Right cardiac atrium (tissue), 5 donors: ENCODE measurements at regions of chr16 and their contacts with region 1.

Region 1: DNA sequence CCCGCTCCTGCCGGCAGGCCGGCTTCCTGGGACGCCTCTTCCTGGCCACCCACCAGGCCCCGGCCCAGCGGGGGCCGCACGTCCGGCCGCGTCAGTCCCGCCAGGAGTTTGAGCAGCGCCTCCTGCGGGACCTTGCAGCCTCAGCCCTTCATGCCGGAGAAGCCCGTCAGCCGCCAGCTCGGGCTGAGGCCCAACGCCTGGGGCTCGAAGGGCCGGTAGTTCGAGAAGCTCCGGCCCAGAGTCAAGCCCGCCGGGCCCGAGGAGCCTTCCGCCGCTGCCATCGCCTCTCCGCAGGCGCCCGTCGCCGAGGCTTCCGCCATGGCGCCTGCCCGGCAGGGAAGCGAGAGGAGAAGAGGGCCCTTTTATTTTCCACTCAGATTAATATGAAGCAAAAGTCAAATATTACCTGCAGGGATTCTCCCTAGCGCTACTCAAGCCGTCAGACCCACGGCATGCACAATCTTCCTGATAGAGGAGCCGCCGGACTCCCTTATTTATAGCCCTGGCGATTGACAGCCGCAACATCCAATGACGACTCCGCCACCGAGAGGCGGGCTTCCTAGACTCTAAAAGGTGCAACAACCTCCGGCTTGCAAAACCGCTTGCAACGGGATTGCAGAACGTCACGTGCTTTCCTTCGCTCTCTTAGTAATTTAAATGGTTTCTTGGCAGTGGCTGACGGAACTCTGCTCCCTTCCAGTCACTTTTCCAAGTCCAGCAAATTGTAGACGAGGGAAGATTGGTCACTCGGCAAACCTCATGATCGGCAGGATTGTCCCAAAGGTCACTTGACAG is at the start of gene SEPHS2:
- DNase-seq: peak; percentile 97 to 100 (median 99)
- ATAC-seq: peak; percentile 97
- H3K4me3 ChIP-seq: peak within 1 kb of the TSS; percentile 93
- H3K27ac ChIP-seq: peak within 1 kb of the TSS; percentile 93
- H3K4me1 ChIP-seq: peaks cover 2% of the 10 kb centered on the region
- H3K27me3 ChIP-seq: no peaks in the 10 kb centered on the region
- total RNA-seq, gene SEPHS2: 34.8 to 41.1 (median 36.4) TPM

Region 2: GRCh38 chr16:30526823-30527635 is 81.4 kb after region 1 on chr16:
- intact Hi-C with region 1: loop called in 2 of 4 experiments (anchors 10 kb)
- DNase-seq: peak; percentile 99 to 100 (median 100)
- ATAC-seq: peak; percentile 95 to 96
- H3K4me3 ChIP-seq: peak overlapping the region; percentile 87
- H3K27ac ChIP-seq: peak overlapping the region; percentile 99
- H3K4me1 ChIP-seq: peaks cover 2% of the 10 kb centered on the region
- H3K27me3 ChIP-seq: no peaks in the 10 kb centered on the region

Region 3: GRCh38 chr16:30534368-30535105 is 88.9 kb after region 1 on chr16 and contains the start of gene ZNF747:
- intact Hi-C with region 1: loop called in 2 of 4 experiments (anchors 10 kb)
- DNase-seq: peak; percentile 93 to 98 (median 97)
- ATAC-seq: peak; percentile 92 to 94
- H3K4me3 ChIP-seq: peak within 1 kb of the TSS; percentile 65
- H3K27ac ChIP-seq: peak within 1 kb of the TSS; percentile 97
- H3K4me1 ChIP-seq: peaks cover 4% of the 10 kb centered on the region
- H3K27me3 ChIP-seq: no peaks in the 10 kb centered on the region
- total RNA-seq, gene ZNF747: 9.1 to 14.6 (median 12.6) TPM

Region 4: GRCh38 chr16:30609926-30610839 is 164.6 kb after region 1 on chr16 and contains the start of gene ZNF689:
- intact Hi-C with region 1: loop called in 2 of 4 experiments (anchors 10 kb)
- DNase-seq: peak; percentile 93 to 96 (median 96)
- ATAC-seq: peak; percentile 97 to 99
- H3K4me3 ChIP-seq: peak within 1 kb of the TSS; percentile 88
- H3K27ac ChIP-seq: peak within 1 kb of the TSS; percentile 94
- H3K4me1 ChIP-seq: no peaks in the 10 kb centered on the region
- H3K27me3 ChIP-seq: no peaks in the 10 kb centered on the region
- total RNA-seq, gene ZNF689: 5.6 to 7.1 (median 6.3) TPM